Natural killer cell (primary cell): ENCODE measurements at regions of chr6 and their contacts with region 1.

Region 1: DNA sequence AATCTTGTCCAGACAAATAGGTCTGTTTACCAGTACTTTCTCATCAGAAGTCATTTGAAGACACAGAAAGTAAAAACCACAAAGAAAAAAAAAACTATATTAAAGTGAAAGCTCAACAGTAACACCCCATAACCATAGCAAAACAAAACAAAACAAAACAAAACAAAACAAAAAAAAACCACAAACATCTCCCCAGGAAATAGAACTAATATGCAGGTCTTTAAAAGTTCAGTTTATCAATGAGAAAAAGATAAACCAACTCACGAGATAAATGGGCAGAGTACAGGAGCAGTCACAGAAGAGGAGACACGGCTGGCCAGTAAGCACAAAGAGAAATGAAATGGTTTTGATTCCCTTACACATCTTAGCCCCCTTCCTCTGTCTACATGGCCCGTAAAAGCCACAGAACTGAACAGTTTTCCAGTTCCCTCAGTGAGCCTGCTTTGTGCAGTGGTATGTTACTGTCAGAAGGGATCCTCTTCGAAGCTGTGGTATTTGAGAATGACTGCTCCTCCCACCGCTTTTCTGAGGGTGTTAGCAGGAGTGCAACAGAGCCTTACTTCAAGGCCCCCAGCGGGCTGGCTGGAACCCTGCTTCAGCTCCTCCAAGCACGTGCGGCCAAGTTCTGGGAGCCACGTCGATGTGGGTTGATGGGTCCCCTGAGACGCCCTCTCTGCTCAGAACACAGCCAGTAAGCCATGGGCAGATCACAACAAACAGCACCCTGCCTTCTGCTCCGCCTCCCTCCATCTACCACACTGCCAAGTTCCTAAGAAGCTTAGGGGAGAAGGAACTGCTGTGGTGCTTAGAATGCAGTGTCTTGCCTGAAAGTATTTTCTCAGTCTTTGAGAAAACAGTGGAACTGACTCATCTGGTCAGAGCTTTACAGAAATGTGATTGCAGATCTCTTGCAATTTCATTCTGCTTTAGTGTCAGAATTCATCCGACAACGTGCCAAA is 14.0 kb downstream of the UST start:
- DNase-seq: peak; percentile 51 to 80
- ATAC-seq: peak; percentile 45 to 69 (median 53)
- H3K4me3 ChIP-seq: peak overlapping the region; percentile 15
- H3K4me3 Mint-ChIP-seq: peak overlapping the region; percentile 89
- H3K27ac ChIP-seq: peak overlapping the region; percentile 90
- H3K27ac Mint-ChIP-seq: peak overlapping the region; percentile 94 to 96
- H3K4me1 ChIP-seq: peaks cover 42% of the 10 kb centered on the region
- H3K4me1 Mint-ChIP-seq: peaks cover 77 to 80% of the 10 kb centered on the region in 2 donors
- H3K27me3 ChIP-seq: no peaks in the 10 kb centered on the region
- H3K27me3 Mint-ChIP-seq: no peaks in the 10 kb centered on the region
- CTCF ChIP-seq: no peak

Region 2: GRCh38 chr6:148565930-148566663 is 194.8 kb before region 1 on chr6:
- intact Hi-C with region 1: loop called (anchors 2 kb)
- DNase-seq: peak in 1 of 2 donors; percentile 28
- ATAC-seq: peak; percentile 35 to 73 (median 63)
- H3K4me3 ChIP-seq: no peak overlapping the region
- H3K4me3 Mint-ChIP-seq: peak overlapping the region; percentile 52
- H3K27ac ChIP-seq: peak overlapping the region; percentile 6
- H3K27ac Mint-ChIP-seq: peak overlapping the region in 1 of 2 donors; percentile 39
- H3K4me1 ChIP-seq: peaks cover 31% of the 10 kb centered on the region
- H3K4me1 Mint-ChIP-seq: peaks cover 20 to 26% of the 10 kb centered on the region in 2 donors
- H3K27me3 ChIP-seq: peaks cover 34% of the 10 kb centered on the region
- H3K27me3 Mint-ChIP-seq: peaks cover 56 to 74% of the 10 kb centered on the region in 2 donors
- CTCF ChIP-seq: no peak

Region 3: GRCh38 chr6:148800535-148800934 is 39.7 kb after region 1 on chr6:
- intact Hi-C with region 1: no loop called
- DNase-seq: no peak
- ATAC-seq: no peak
- H3K4me3 ChIP-seq: no peak overlapping the region
- H3K4me3 Mint-ChIP-seq: no peak overlapping the region
- H3K27ac ChIP-seq: no peak overlapping the region
- H3K27ac Mint-ChIP-seq: no peak overlapping the region
- H3K4me1 ChIP-seq: peaks cover 9% of the 10 kb centered on the region
- H3K4me1 Mint-ChIP-seq: peaks cover 39 to 43% of the 10 kb centered on the region in 2 donors
- H3K27me3 ChIP-seq: no peaks in the 10 kb centered on the region
- H3K27me3 Mint-ChIP-seq: no peaks in the 10 kb centered on the region
- CTCF ChIP-seq: no peak

Region 4: GRCh38 chr6:148831064-148831463 is 70.2 kb after region 1 on chr6:
- intact Hi-C with region 1: loop called (anchors 1 kb)
- DNase-seq: peak; percentile 19 to 67
- ATAC-seq: peak; percentile 75 to 83 (median 75)
- H3K4me3 ChIP-seq: peak overlapping the region; percentile 22
- H3K4me3 Mint-ChIP-seq: peak overlapping the region; percentile 97
- H3K27ac ChIP-seq: peak overlapping the region; percentile 15
- H3K27ac Mint-ChIP-seq: peak overlapping the region; percentile 85 to 96
- H3K4me1 ChIP-seq: peaks cover 26% of the 10 kb centered on the region
- H3K4me1 Mint-ChIP-seq: peaks cover 36 to 53% of the 10 kb centered on the region in 2 donors
- H3K27me3 ChIP-seq: no peaks in the 10 kb centered on the region
- H3K27me3 Mint-ChIP-seq: no peaks in the 10 kb centered on the region
- CTCF ChIP-seq: no peak